ENCODE measurements at regions of chr14 and their contacts with region 1.

Region 1: DNA sequence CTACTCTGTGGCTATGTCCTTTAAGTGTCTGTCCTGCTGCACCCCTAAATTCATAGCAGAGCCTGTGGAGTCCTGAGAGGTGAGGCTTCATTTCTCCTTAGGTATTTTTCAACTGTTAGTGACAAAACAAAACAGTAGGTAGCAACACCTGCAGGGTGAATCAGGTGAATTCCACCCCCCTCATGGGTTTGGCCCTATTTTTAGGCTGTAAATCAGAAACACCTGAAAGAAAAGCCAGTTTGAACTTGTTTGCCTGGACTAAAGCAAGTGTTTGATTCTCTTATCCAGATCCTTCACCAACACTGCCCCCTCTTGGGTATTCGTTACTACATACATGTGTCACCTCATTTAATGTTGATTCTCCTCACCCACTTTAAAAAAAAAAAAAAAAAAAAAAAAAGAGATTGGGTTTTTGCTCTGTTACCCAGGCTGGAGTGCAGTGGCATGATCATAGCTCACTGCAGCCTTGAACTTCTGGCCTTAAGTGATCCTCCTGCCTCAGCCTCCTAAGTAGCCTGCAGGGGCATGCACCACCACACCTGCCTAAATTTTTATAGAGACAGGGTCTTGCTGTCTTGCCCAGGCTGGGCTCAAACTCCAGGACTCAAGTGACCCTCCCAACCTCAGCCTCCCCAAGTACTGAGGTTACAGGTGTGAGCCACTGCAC is 10.3 kb downstream of the TBPL2 start:
- DNase-seq: no peak
- ATAC-seq: peak; percentile 91
- H3K4me3 ChIP-seq: no peak overlapping the region
- H3K27ac ChIP-seq: no peak overlapping the region
- H3K4me1 ChIP-seq: peaks cover 3% of the 10 kb centered on the region; the same call in 1 of the 2 replicates
- H3K27me3 ChIP-seq: no peaks in the 10 kb centered on the region
- CTCF ChIP-seq: peak; percentile 34 to 55 (median 48); a peak in 5 of 6 replicates
- EP300 ChIP-seq: no peak
- POLR2A ChIP-seq: no peak
- RAD21 ChIP-seq: peak; percentile 73

Region 2: DNA sequence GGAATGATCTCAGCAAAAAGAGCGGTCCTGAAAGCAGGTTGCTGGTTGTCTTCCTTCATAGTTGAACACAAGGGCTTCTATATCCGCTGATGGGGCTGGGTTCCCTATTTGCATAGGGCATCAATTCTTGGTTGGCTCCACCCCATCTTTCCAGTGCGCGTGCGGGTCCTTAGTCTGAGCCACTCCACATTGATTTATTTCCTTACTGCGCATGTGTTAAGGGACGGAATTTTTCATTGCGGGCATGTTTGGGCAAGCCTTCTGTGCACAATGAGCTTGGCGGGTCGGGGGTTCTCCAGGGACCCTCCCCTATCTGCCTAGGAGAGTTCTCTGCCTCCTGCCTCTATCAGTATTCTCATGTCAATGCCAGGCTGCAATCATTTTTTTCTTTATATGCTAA is 217.5 kb before region 1 on chr14:
- CTCF ChIA-PET with region 1: interaction called, 31 read pairs
- POLR2A ChIA-PET with region 1: no interaction called
- RAD21 ChIA-PET with region 1: interaction called, 6 read pairs
- SMC1A ChIA-PET with region 1: interaction called, 11 read pairs
- in situ Hi-C with region 1: no loop called
- intact Hi-C with region 1: loop called (anchors 1 kb)
- DNase-seq: no peak
- ATAC-seq: no peak
- H3K4me3 ChIP-seq: no peak overlapping the region
- H3K27ac ChIP-seq: no peak overlapping the region
- H3K4me1 ChIP-seq: no peaks in the 10 kb centered on the region
- H3K27me3 ChIP-seq: no peaks in the 10 kb centered on the region
- CTCF ChIP-seq: no peak
- EP300 ChIP-seq: no peak
- POLR2A ChIP-seq: no peak
- RAD21 ChIP-seq: no peak

Region 3: GRCh38 chr14:55245657-55246268 is 184.4 kb before region 1 on chr14:
- CTCF ChIA-PET with region 1: interaction called, 7 read pairs
- POLR2A ChIA-PET with region 1: no interaction called
- RAD21 ChIA-PET with region 1: no interaction called
- SMC1A ChIA-PET with region 1: no interaction called
- in situ Hi-C with region 1: no loop called
- intact Hi-C with region 1: loop called (anchors 1 kb)
- DNase-seq: no peak
- ATAC-seq: peak; percentile 83
- H3K4me3 ChIP-seq: no peak overlapping the region
- H3K27ac ChIP-seq: no peak overlapping the region
- H3K4me1 ChIP-seq: no peaks in the 10 kb centered on the region
- H3K27me3 ChIP-seq: no peaks in the 10 kb centered on the region
- CTCF ChIP-seq: peak; percentile 57 to 68 (median 64); a peak in 5 of 6 replicates
- EP300 ChIP-seq: no peak
- POLR2A ChIP-seq: no peak
- RAD21 ChIP-seq: peak; percentile 68

Region 4: DNA sequence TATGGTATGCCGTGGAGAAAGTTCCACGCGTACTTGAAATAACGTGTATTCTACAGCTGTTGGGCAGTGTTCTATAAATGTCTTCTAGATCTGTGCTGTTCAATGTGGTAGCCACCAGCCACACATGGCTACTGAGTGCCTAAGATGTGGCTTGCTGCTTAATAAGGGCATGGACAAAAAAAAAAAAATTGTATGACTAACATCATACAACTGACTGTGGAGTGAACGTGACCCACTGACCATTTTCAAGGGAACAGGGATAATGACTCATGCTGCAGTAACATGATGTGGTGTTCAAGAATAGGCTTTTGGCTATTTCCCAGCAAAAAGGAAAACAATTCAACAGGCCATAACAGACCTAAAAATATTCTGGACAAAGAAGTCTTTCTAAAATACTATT is 31.5 kb before region 1 on chr14:
- CTCF ChIA-PET with region 1: no interaction called
- POLR2A ChIA-PET with region 1: no interaction called
- RAD21 ChIA-PET with region 1: no interaction called
- SMC1A ChIA-PET with region 1: no interaction called
- in situ Hi-C with region 1: no loop called
- intact Hi-C with region 1: no loop called
- DNase-seq: no peak
- ATAC-seq: no peak
- H3K4me3 ChIP-seq: no peak overlapping the region
- H3K27ac ChIP-seq: no peak overlapping the region
- H3K4me1 ChIP-seq: no peaks in the 10 kb centered on the region
- H3K27me3 ChIP-seq: no peaks in the 10 kb centered on the region
- CTCF ChIP-seq: no peak
- EP300 ChIP-seq: no peak
- POLR2A ChIP-seq: no peak
- RAD21 ChIP-seq: no peak

Region 5: DNA sequence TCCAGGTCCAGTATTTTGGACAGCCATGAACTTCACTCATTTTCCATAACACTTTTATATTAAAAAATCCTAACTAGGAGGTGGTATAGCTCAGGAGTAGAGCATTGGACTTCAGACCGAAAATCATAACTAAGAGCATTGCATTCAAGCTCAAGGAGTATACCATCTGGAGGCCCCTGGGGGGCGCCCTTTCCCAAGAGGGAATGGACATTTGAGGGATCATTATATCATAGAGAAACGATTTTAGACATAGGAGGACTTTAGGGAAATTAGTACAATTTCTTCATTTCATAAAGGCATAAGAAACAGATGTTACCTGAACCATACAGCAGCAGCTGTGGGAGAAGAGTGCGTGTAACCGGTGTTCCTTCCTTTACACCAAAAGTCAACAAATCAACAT is 13.3 kb before region 1 on chr14:
- CTCF ChIA-PET with region 1: interaction called, 18 read pairs
- POLR2A ChIA-PET with region 1: interaction called, 3 read pairs
- RAD21 ChIA-PET with region 1: interaction called, 8 read pairs
- SMC1A ChIA-PET with region 1: interaction called, 6 read pairs
- in situ Hi-C with region 1: no loop called
- intact Hi-C with region 1: no loop called
- DNase-seq: no peak
- ATAC-seq: peak; percentile 66
- H3K4me3 ChIP-seq: no peak overlapping the region
- H3K27ac ChIP-seq: no peak overlapping the region
- H3K4me1 ChIP-seq: no peaks in the 10 kb centered on the region; the same call in 1 of the 2 replicates
- H3K27me3 ChIP-seq: no peaks in the 10 kb centered on the region
- CTCF ChIP-seq: peak; percentile 34 to 47 (median 42); a peak in 5 of 6 replicates
- EP300 ChIP-seq: no peak
- POLR2A ChIP-seq: no peak
- RAD21 ChIP-seq: 0 out of 2 replicates have a peak, but pooled peaks have one; percentile 24

Region 6: DNA sequence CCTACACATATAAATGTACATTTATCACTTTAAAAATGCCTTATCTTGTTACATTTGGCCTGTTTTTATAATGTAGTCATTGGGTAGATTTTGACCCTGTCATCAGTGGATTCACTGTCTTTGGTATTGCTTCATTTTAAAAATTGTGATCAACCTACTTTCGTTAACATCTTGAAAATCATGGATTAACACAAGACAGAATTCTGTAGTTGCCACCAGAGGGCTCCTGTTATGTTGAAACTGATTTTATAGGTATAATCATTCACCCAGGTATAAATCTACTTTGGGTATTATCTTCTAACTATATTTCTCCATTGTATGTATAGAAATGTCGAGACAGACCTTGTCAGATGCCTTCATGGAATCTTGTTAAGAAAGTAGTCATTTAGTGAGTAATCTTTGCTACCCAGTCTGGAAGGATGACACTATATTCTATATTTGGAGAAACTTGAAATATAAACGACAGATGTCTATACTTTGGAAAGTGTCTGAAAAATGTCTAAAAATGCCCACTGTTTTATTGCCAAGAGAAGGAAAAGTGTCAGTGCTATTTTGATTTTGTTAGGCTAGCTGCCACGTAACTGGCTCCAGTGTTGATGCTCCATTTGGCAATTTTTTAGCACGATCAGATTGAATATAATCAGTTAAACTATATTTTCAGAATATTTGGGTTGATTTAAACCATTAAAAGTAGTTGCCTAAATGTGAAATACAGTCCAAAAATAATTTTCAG is 817.5 kb after region 1 on chr14:
- CTCF ChIA-PET with region 1: no interaction called
- POLR2A ChIA-PET with region 1: no interaction called
- RAD21 ChIA-PET with region 1: no interaction called
- SMC1A ChIA-PET with region 1: no interaction called
- in situ Hi-C with region 1: no loop called
- intact Hi-C with region 1: no loop called
- DNase-seq: no peak
- ATAC-seq: no peak
- H3K4me3 ChIP-seq: no peak overlapping the region
- H3K27ac ChIP-seq: no peak overlapping the region
- H3K4me1 ChIP-seq: no peaks in the 10 kb centered on the region
- H3K27me3 ChIP-seq: no peaks in the 10 kb centered on the region; a peak in 1 of 4 replicates
- CTCF ChIP-seq: 0 out of 6 replicates have a peak, but pooled peaks of 2 of the 3 experiments have one; percentile 4 to 17
- EP300 ChIP-seq: no peak
- POLR2A ChIP-seq: no peak
- RAD21 ChIP-seq: no peak

Measured in GM12878 (cell line).